Sciatic nerve (tissue), 2 donors: ENCODE measurements at regions of chr17 and their contacts with region 1.

Region 1: DNA sequence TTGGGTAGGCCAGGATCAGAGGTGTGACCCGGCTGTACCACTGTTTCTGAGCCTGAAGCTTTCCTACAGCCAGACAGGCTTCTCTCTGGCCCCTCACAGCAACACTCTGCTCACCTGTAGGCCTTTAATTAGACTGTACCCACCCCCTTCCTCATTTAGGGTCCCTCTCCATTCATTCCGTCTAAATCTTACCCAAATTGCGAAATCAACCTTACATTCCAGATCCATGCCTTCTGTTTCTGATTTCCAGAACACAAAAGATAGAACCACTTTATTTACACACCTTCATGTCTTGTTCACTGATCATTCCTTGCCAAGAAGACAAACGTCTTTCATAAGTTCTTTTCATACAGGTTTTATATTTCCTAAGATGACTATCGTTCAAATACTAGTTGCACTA is 160.8 kb downstream of the ZNF18 start:
- DNase-seq: no peak
- ATAC-seq: no peak

Region 2: GRCh38 chr17:11744696-11745095 is 91.8 kb before region 1 on chr17:
- intact Hi-C with region 1: loop called (anchors 5 kb)
- DNase-seq: no peak
- ATAC-seq: no peak